MCF 10A (cell line): ENCODE measurements at regions of chr6 and their contacts with region 1.

Region 1: GRCh38 chr6:83215131-83216047 is 22.2 kb downstream of the RWDD2A start:
- DNase-seq: peak; percentile 77
- H3K4me3 Mint-ChIP-seq: no peak overlapping the region
- H3K27ac Mint-ChIP-seq: no peak overlapping the region
- H3K4me1 Mint-ChIP-seq: no peaks in the 10 kb centered on the region
- H3K27me3 Mint-ChIP-seq: no peaks in the 10 kb centered on the region
- CTCF ChIP-seq: peak; percentile 71

Region 2: DNA sequence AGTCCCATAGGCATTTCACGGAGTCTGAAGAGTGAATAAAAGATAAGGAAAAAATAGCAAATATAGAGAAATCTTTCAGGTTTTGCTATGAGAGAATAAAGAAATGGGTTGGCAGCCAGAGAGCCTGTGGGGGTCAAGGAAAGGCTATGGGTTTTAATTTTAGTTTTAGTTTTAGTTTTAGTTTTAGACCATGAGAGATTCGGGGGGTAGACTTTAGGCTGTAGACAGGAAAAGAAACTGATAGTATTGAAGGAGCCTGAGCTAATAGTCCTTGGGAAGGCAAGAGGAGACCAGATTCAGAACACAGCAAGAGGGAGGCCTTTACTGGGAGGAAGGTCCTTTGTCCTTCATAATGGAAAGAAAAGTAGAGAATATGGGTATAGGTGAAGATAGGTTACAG is 128.6 kb before region 1 on chr6:
- CTCF ChIA-PET with region 1: no interaction called
- POLR2A ChIA-PET with region 1: no interaction called
- intact Hi-C with region 1: no loop called
- DNase-seq: no peak
- H3K4me3 Mint-ChIP-seq: no peak overlapping the region
- H3K27ac Mint-ChIP-seq: no peak overlapping the region
- H3K4me1 Mint-ChIP-seq: peaks cover 6% of the 10 kb centered on the region
- H3K27me3 Mint-ChIP-seq: no peaks in the 10 kb centered on the region
- CTCF ChIP-seq: no peak

Region 3: DNA sequence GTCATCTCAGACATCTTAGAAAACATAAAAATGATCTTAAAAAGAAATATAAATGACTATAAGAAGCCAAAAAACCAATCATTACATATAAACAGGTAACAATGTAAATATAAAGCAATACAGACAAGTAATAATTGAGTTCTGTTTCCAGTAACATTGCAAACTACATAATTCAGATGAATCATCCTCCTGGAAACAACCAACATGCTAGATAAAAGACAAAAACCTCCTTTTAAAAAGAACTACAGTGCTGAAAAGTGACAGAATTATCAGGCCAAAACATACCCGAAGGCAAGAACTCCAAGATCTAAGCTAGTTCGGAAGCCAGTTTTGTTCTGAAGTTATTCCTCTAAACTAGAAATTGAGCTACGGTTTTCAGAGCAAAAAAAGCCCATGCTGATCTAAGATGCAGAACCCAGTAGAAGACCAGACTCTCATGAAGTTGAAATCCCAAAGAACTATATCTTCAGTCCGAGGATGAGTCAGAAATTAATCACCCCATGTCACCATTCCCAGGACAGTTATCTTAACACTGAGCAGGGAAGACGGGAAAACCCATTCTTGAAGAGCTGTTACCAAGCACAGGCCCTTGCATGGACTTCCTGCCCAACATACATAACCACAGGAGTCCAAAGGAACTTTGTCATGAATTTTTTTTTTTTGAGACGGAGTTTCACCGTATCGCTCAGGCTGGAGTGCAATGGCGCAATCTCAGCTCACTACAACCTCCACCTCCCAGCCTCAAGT is 32.1 kb before region 1 on chr6:
- CTCF ChIA-PET with region 1: interaction called, 59 read pairs
- POLR2A ChIA-PET with region 1: interaction called, 5 read pairs
- intact Hi-C with region 1: loop called (anchors 1 kb)
- DNase-seq: peak; percentile 91
- H3K4me3 Mint-ChIP-seq: peak overlapping the region; percentile 12
- H3K27ac Mint-ChIP-seq: peak overlapping the region; percentile 74
- H3K4me1 Mint-ChIP-seq: peaks cover 30% of the 10 kb centered on the region
- H3K27me3 Mint-ChIP-seq: no peaks in the 10 kb centered on the region
- CTCF ChIP-seq: no peak

Region 4: DNA sequence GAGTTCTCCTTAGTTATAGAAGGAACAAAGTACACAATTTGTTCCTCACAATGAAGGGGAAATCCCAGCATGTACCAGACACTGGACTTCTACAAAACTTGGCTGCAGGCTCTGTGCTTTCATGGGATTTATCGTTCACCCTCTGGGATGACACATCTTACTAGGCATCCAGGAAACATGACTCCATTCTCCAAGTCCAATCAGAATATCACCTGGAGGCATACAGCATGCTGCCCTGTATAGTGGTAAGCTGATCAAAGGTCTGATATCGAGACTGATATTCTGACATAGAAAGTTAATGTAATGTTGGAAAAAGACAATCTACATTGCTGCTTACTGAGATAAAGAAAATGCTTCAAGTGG is 15.5 kb before region 1 on chr6:
- CTCF ChIA-PET with region 1: interaction called, 47 read pairs
- POLR2A ChIA-PET with region 1: interaction called, 9 read pairs
- intact Hi-C with region 1: no loop called
- DNase-seq: peak; percentile 72
- H3K4me3 Mint-ChIP-seq: no peak overlapping the region
- H3K27ac Mint-ChIP-seq: peak overlapping the region; percentile 3
- H3K4me1 Mint-ChIP-seq: peaks cover 8% of the 10 kb centered on the region
- H3K27me3 Mint-ChIP-seq: no peaks in the 10 kb centered on the region
- CTCF ChIP-seq: no peak